GM18951 (cell line): ENCODE measurements at regions of chr17 and their contacts with region 1.

Region 1: GRCh38 chr17:34171245-34171818 is 83.8 kb upstream of the CCL2 start:
- POLR2A ChIP-seq: no peak

Region 2: GRCh38 chr17:33779225-33779591 is 392.1 kb before region 1 on chr17:
- in situ Hi-C with region 1: loop called (anchors 25 kb)
- POLR2A ChIP-seq: no peak

Region 3: DNA sequence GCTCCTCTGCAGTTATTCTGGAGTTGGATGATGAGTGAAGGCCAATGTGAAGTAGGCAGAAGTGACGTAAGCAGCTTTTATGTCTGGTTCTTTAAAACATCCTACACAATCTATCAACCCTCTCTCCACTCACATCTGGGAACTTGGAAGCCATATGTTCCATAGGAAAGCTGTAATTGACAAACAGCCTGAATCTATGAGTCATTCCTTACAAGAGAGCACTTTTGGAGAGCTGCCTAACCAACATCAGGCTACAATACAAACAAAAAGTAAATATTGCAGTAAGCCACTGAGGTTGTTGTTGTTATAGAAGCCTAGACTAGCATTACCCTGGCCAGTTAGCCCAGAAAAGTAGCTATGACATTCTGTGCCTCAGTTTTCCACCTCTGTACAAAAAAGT is 104.5 kb after region 1 on chr17:
- in situ Hi-C with region 1: no loop called
- POLR2A ChIP-seq: no peak

Region 4: DNA sequence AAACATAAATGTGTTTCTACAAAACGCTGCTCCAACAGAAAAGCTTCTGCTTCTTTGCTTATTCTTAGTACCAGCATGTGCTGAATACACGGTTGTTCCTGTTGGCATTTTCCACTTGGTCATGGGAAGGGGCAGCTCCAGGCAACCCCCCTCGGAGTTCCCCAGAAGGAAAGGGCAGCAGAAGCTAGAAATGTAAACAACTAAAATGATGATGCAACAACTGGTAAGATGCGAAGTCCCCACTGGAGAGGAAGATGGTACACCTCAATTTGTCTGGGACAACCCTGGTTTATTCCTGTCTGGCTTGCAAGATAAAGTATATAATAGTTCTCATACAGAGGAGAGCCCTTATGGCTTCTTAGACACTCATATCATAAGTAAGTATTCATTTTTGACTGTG is 175.7 kb after region 1 on chr17:
- in situ Hi-C with region 1: no loop called
- POLR2A ChIP-seq: no peak